Calu3 (cell line): ENCODE measurements at regions of chr3 and their contacts with region 1.

Region 1: DNA sequence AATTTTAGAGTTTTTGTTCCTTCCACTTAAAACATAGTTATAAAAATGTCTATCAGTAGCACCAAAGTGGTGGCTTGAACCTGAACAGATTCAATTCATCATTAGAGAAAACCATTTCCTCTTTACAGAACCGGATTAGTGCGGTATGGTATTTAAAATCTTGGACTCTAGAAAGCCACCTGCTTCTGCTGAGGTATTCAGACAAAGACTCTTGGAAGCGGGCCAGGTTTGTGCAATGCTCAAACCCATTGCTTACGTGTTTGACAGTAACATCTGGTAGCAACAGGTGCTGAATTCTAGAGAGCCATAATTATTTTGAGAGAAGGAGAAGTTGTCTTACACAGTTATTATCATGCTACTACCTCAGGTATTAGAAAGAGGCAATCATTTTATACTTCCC is 290.5 kb downstream of the NAALADL2 start:
- DNase-seq: peak; percentile 92
- H3K4me3 Mint-ChIP-seq: peak overlapping the region; percentile 48
- H3K27ac Mint-ChIP-seq: peak overlapping the region; percentile 94
- H3K4me1 Mint-ChIP-seq: peaks cover 67% of the 10 kb centered on the region
- H3K27me3 Mint-ChIP-seq: no peaks in the 10 kb centered on the region
- CTCF ChIP-seq: no peak

Region 2: DNA sequence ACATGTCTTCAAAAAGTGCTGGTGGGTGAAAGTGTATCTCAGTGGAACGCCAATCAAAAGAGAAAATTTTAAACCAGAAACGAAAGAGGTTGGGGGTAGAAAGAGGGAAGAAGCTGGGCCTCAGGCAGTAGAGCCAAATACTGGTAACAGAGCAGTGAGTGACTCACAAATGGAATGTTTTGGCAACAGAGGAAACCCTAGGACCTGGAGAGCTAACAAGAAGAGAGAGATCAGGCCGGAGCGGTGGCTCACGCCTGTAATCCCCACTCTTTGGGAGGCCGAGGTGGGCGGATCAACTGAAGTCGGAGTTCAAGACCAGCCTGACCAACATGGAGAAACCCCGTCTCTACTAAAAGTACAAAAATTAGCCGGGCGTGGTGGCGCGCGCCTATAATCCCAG is 741.4 kb before region 1 on chr3:
- CTCF ChIA-PET with region 1: no interaction called
- intact Hi-C with region 1: loop called (anchors 10 kb)
- DNase-seq: no peak
- H3K4me3 Mint-ChIP-seq: no peak overlapping the region
- H3K27ac Mint-ChIP-seq: no peak overlapping the region
- H3K4me1 Mint-ChIP-seq: peaks cover 35% of the 10 kb centered on the region
- H3K27me3 Mint-ChIP-seq: no peaks in the 10 kb centered on the region
- CTCF ChIP-seq: no peak

Region 3: GRCh38 chr3:174533286-174533685 is 616.4 kb before region 1 on chr3:
- CTCF ChIA-PET with region 1: no interaction called
- intact Hi-C with region 1: loop called (anchors 5 kb)
- DNase-seq: no peak
- H3K4me3 Mint-ChIP-seq: peak overlapping the region; percentile 51
- H3K27ac Mint-ChIP-seq: peak overlapping the region; percentile 83
- H3K4me1 Mint-ChIP-seq: peaks cover 41% of the 10 kb centered on the region
- H3K27me3 Mint-ChIP-seq: no peaks in the 10 kb centered on the region
- CTCF ChIP-seq: no peak

Region 4: DNA sequence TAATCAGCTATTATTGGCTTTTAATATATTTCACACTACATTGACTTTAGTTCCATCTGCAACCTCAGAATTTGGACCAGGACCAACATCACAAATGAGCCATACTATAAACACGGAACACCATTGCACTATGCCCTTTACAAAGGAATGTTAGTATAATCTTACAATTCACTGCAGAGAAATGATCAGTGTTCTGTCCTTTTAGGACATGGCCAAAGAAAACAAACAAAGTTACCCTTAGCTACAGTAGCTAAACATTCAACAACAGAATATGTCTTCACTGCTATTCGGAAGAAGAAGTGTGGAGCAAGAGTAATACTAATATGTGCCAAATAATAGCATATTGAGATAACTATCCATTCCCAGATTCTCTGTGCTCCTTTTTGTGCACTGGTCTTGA is 200.1 kb before region 1 on chr3:
- CTCF ChIA-PET with region 1: no interaction called
- intact Hi-C with region 1: loop called (anchors 1 kb)
- DNase-seq: peak; percentile 24
- H3K4me3 Mint-ChIP-seq: no peak overlapping the region
- H3K27ac Mint-ChIP-seq: peak overlapping the region; percentile 90
- H3K4me1 Mint-ChIP-seq: peaks cover 53% of the 10 kb centered on the region
- H3K27me3 Mint-ChIP-seq: no peaks in the 10 kb centered on the region
- CTCF ChIP-seq: no peak

Region 5: GRCh38 chr3:175495331-175495730 is 345.7 kb after region 1 on chr3:
- CTCF ChIA-PET with region 1: no interaction called
- intact Hi-C with region 1: loop called (anchors 5 kb)
- DNase-seq: no peak
- H3K4me3 Mint-ChIP-seq: no peak overlapping the region
- H3K27ac Mint-ChIP-seq: peak overlapping the region; percentile 8
- H3K4me1 Mint-ChIP-seq: peaks cover 51% of the 10 kb centered on the region
- H3K27me3 Mint-ChIP-seq: no peaks in the 10 kb centered on the region
- CTCF ChIP-seq: no peak

Region 6: DNA sequence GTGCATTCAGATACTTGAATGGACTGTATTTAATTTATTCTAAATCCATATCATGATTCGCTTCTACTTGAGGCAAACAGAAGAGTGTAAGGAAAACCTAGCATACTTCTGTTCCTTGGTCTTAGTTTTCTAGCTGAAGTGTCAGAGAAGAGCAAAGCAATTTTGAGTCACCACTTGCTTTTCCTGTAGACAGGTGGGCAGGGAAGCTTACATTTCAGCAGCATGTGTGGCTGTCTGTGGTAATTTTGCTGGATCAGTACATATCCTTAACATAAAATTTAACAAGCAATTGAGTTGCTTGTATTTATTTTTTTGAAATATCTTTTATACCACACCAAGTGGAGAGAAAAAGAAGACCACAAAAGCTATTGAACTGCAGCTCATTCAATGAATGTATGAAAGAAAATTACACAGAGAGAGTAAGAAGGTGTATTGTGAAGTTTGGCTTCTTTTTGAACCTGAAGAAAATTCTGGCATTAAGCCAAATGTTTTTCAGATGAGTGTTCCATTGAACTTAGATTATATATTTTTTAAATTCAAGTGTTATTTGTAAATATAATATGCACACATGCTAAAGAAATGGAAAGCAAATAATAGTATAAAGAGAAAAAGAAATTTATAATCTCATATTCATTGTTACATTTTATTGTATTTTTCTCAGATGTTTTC is 457.1 kb after region 1 on chr3:
- CTCF ChIA-PET with region 1: no interaction called
- intact Hi-C with region 1: loop called (anchors 5 kb)
- DNase-seq: no peak
- H3K4me3 Mint-ChIP-seq: no peak overlapping the region
- H3K27ac Mint-ChIP-seq: peak overlapping the region; percentile 87
- H3K4me1 Mint-ChIP-seq: peaks cover 69% of the 10 kb centered on the region
- H3K27me3 Mint-ChIP-seq: no peaks in the 10 kb centered on the region
- CTCF ChIP-seq: no peak